CD4-positive, alpha-beta T cell (primary cell): ENCODE measurements at regions of chr12 and their contacts with region 1.

Region 1: DNA sequence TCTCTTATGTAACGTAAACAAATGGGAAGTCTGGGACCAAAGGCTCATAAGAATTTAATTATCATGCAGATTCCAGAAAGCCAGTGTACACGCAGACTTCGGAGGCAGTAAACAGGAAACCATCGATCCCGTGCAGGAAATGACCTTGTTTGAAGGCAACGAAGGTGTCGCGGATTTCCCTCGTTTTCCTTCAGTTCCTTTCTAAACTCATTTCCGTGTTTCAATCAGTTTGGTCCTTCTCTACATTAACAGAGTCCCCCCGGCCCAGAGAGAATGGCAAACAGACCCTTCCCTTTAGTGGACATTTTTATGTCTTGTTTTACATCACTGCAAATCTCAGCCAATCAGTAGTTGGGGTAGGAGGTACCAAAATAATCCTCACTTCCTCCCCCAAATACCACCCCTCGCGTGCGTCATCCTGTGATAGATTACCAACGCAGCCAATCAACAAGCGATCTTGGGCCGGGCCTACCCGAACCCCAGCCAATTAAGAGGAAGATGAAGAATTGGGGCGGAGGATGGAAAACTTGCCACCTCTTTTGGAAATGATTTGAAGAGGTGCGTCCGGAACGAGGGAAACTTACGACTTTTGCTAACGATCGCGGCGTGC is 6.1 kb upstream of the FOXJ2 start:
- DNase-seq: peak; percentile 86 to 99 (median 93)
- ATAC-seq: peak; percentile 88
- H3K4me3 ChIP-seq: peak overlapping the region; percentile 81
- H3K4me3 Mint-ChIP-seq: peak overlapping the region; percentile 92
- H3K27ac ChIP-seq: peak overlapping the region; percentile 98 to 100
- H3K27ac Mint-ChIP-seq: peak overlapping the region; percentile 99
- H3K4me1 ChIP-seq: peaks cover 20% of the 10 kb centered on the region
- H3K4me1 Mint-ChIP-seq: peaks cover 18% of the 10 kb centered on the region
- H3K27me3 ChIP-seq: no peaks in the 10 kb centered on the region
- H3K27me3 Mint-ChIP-seq: no peaks in the 10 kb centered on the region
- CTCF ChIP-seq: no peak

Region 2: GRCh38 chr12:7188562-7189397 is 837.6 kb before region 1 on chr12:
- CTCF ChIA-PET with region 1: no interaction called
- POLR2A ChIA-PET with region 1: no interaction called
- intact Hi-C with region 1: loop called in 1 of 2 experiments (anchors 10 kb)
- DNase-seq: peak; percentile 43 to 79 (median 58)
- ATAC-seq: peak; percentile 44
- H3K4me3 ChIP-seq: peak overlapping the region; percentile 91
- H3K4me3 Mint-ChIP-seq: peak overlapping the region; percentile 98
- H3K27ac ChIP-seq: peak overlapping the region; percentile 91 to 93
- H3K27ac Mint-ChIP-seq: peak overlapping the region; percentile 97
- H3K4me1 ChIP-seq: peaks cover 27% of the 10 kb centered on the region
- H3K4me1 Mint-ChIP-seq: peaks cover 46% of the 10 kb centered on the region
- H3K27me3 ChIP-seq: no peaks in the 10 kb centered on the region
- H3K27me3 Mint-ChIP-seq: no peaks in the 10 kb centered on the region
- CTCF ChIP-seq: peak; percentile 63

Region 3: GRCh38 chr12:7859552-7859951 is 166.8 kb before region 1 on chr12:
- CTCF ChIA-PET with region 1: no interaction called
- POLR2A ChIA-PET with region 1: interaction called, 11 read pairs
- intact Hi-C with region 1: no loop called
- DNase-seq: no peak
- ATAC-seq: no peak
- H3K4me3 ChIP-seq: no peak overlapping the region
- H3K4me3 Mint-ChIP-seq: no peak overlapping the region
- H3K27ac ChIP-seq: no peak overlapping the region
- H3K27ac Mint-ChIP-seq: no peak overlapping the region
- H3K4me1 ChIP-seq: peaks cover 4% of the 10 kb centered on the region
- H3K4me1 Mint-ChIP-seq: peaks cover 6% of the 10 kb centered on the region
- H3K27me3 ChIP-seq: peaks cover 0 to 3% of the 10 kb centered on the region in 2 experiments
- H3K27me3 Mint-ChIP-seq: no peaks in the 10 kb centered on the region
- CTCF ChIP-seq: no peak

Region 4: GRCh38 chr12:7959701-7960121 is 66.7 kb before region 1 on chr12:
- CTCF ChIA-PET with region 1: interaction called, 7 read pairs
- POLR2A ChIA-PET with region 1: interaction called, 29 read pairs
- intact Hi-C with region 1: loop called in 1 of 2 experiments (anchors 2 kb)
- DNase-seq: peak in 13 of 14 experiments; percentile 22 to 77 (median 37)
- ATAC-seq: peak; percentile 24
- H3K4me3 ChIP-seq: peak overlapping the region; percentile 64
- H3K4me3 Mint-ChIP-seq: peak overlapping the region; percentile 87
- H3K27ac ChIP-seq: peak overlapping the region; percentile 59 to 76
- H3K27ac Mint-ChIP-seq: peak overlapping the region; percentile 90
- H3K4me1 ChIP-seq: peaks cover 23% of the 10 kb centered on the region
- H3K4me1 Mint-ChIP-seq: peaks cover 34% of the 10 kb centered on the region
- H3K27me3 ChIP-seq: no peaks in the 10 kb centered on the region
- H3K27me3 Mint-ChIP-seq: no peaks in the 10 kb centered on the region
- CTCF ChIP-seq: no peak

Region 5: DNA sequence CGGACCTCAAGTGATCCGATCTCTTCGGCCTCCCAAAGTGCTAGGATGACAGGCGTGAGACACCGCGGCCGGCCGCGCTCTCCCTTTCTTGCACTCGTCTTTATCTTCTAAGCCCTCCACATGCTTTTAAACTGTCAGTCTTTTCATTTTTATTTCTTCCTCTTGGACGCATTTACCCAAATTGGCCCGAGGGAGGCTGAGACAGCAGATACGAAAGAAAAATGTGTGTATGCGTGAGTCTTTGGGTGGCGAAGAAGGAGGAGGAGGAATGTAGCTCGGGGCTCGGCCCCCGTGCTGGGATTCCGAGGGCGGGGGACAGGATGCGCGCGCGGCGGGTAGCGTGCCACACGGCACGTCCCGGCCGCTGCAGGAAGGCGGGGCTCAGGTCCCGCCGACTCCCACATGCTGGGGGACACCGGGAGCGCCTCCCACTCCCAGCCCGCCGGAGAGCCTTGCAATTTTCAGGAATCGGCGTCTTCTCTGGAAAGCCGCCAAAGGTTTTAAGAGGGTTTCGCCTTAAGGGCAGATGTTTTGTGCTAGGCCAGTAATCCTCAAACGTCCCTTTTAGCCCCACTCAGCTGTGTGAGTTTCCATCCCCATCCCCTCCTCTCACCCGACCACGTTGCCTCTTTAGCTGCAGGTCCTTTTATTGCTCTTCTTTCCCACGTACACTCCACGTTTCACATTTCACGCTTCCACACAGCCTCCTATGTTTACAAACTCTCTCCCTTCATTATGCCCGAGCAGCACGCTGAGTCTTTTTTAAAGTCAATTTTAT is 55.7 kb before region 1 on chr12:
- CTCF ChIA-PET with region 1: no interaction called
- POLR2A ChIA-PET with region 1: interaction called, 24 read pairs
- intact Hi-C with region 1: loop called in 1 of 2 experiments (anchors 1 kb)
- DNase-seq: peak; percentile 69 to 95 (median 80)
- ATAC-seq: peak; percentile 83
- H3K4me3 ChIP-seq: peak overlapping the region; percentile 68
- H3K4me3 Mint-ChIP-seq: peak overlapping the region; percentile 88
- H3K27ac ChIP-seq: peak overlapping the region; percentile 76 to 87
- H3K27ac Mint-ChIP-seq: peak overlapping the region; percentile 94
- H3K4me1 ChIP-seq: peaks cover 25% of the 10 kb centered on the region
- H3K4me1 Mint-ChIP-seq: peaks cover 30% of the 10 kb centered on the region
- H3K27me3 ChIP-seq: no peaks in the 10 kb centered on the region
- H3K27me3 Mint-ChIP-seq: no peaks in the 10 kb centered on the region
- CTCF ChIP-seq: no peak

Region 6: GRCh38 chr12:7995266-7995963 is 31.0 kb before region 1 on chr12:
- CTCF ChIA-PET with region 1: no interaction called
- POLR2A ChIA-PET with region 1: interaction called, 5 read pairs
- intact Hi-C with region 1: loop called in 1 of 2 experiments (anchors 2 kb)
- DNase-seq: peak; percentile 64 to 93 (median 76)
- ATAC-seq: peak; percentile 98
- H3K4me3 ChIP-seq: no peak overlapping the region
- H3K4me3 Mint-ChIP-seq: no peak overlapping the region
- H3K27ac ChIP-seq: no peak overlapping the region
- H3K27ac Mint-ChIP-seq: no peak overlapping the region
- H3K4me1 ChIP-seq: peaks cover 23% of the 10 kb centered on the region
- H3K4me1 Mint-ChIP-seq: peaks cover 12% of the 10 kb centered on the region
- H3K27me3 ChIP-seq: no peaks in the 10 kb centered on the region
- H3K27me3 Mint-ChIP-seq: no peaks in the 10 kb centered on the region
- CTCF ChIP-seq: peak; percentile 77

Region 7: DNA sequence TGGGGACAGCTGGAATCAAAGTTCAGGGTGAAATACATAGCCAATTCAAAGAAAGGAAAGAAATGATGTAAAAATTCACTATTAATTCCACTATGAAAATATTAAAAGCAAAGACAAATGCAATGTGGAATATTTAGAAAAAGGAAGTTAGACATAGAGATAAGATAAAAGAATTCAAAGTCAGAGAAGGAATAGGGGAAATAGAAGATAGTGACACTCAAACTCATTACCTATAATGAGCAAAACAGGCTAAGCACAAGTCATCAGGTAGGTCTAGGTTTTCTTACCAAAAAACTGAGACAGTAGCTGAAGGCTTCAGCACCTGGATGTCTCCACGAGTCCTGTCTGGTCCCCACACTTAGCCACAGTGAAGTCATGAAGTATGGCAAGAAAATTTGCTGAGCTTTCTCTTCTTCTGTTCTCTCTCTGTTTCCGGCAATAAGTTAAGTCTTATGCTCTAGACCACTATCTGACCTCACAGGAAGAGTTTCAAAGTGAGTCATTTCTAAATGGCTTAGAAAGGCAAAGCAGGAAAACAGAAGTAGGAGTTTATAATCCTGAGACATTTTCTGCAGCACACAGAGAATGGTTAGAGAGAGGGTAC is 39.7 kb after region 1 on chr12 and contains the start of gene C3AR1:
- CTCF ChIA-PET with region 1: interaction called, 3 read pairs
- POLR2A ChIA-PET with region 1: interaction called, 13 read pairs
- intact Hi-C with region 1: no loop called
- DNase-seq: peak in 13 of 14 experiments; percentile 16 to 88 (median 47)
- ATAC-seq: peak; percentile 97
- H3K4me3 ChIP-seq: peak within 1 kb of the TSS; percentile 19
- H3K4me3 Mint-ChIP-seq: peak within 1 kb of the TSS; percentile 47
- H3K27ac ChIP-seq: peak within 1 kb of the TSS; percentile 47 to 48
- H3K27ac Mint-ChIP-seq: peak within 1 kb of the TSS; percentile 91
- H3K4me1 ChIP-seq: peaks cover 23% of the 10 kb centered on the region
- H3K4me1 Mint-ChIP-seq: peaks cover 32% of the 10 kb centered on the region
- H3K27me3 ChIP-seq: no peaks in the 10 kb centered on the region
- H3K27me3 Mint-ChIP-seq: no peaks in the 10 kb centered on the region
- CTCF ChIP-seq: no peak
- total RNA-seq, gene C3AR1: 1.4 TPM